Activated T-helper 1 cell treated with anti-CD3 and anti-CD28 coated beads, Interleukin-12 subunit alpha, Interleukin-12 subunit beta, Interleukin-2, Interleukin-4 antibody, amounts not matched to agents 30 ng/mL and 10 ng/mL and 1 ng/mL, durations not matched to agents 14 hours and 24 hours and 36 hours (primary cell): ENCODE measurements at regions of chr5 and their contacts with region 1.

Region 1: DNA sequence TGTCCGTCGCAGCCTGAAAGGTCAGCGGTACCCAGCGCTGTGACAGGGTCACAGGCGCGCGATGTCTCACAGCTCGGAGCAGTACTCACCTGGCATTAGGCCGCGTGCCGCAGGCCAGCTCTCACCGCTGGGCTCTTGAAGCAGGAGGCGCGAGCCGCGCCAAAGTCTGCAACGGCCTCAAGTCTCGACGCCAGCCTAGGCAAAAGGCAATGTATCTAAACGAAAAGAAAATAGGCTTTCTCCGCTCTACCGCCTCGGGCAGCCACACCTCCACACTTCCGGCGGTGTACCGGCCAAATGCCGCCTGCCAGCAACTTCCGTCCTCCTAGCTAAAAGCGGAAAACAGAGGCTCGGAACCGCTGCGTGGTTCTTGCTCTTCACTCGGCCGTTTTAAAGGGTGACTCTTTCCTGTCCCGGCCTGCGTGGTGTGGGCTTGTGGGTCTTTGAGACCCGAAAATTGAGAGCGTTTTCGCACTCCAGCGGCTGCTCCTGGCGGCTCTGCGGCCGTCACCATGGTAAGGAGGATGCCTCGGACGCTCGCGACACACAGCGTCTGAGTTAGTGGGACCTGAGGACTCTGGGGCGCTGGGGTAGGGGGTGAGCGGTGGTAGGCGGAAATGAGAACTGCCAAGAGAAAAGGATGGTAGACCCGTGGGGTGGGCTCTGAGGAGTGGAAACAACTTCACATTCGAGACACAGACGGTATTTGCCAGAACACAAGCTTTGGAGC is at the starts of genes GFM2 and NSA2:
- DNase-seq: peak; percentile 91
- H3K4me3 Mint-ChIP-seq: peak within 1 kb of the TSS; percentile 98
- H3K27ac Mint-ChIP-seq: peak within 1 kb of the TSS; percentile 98
- H3K4me1 Mint-ChIP-seq: peaks cover 17% of the 10 kb centered on the region
- H3K27me3 Mint-ChIP-seq: no peaks in the 10 kb centered on the region
- total RNA-seq, gene GFM2: 32.4 and 35.5 TPM in 2 replicates
- total RNA-seq, gene NSA2: 89.0 and 94.9 TPM in 2 replicates

Region 2: GRCh38 chr5:73902327-73903051 is 864.5 kb before region 1 on chr5:
- intact Hi-C with region 1: loop called (anchors 5 kb)
- DNase-seq: no peak
- H3K4me3 Mint-ChIP-seq: no peak overlapping the region
- H3K27ac Mint-ChIP-seq: no peak overlapping the region
- H3K4me1 Mint-ChIP-seq: peaks cover 14% of the 10 kb centered on the region
- H3K27me3 Mint-ChIP-seq: peaks cover 38% of the 10 kb centered on the region

Region 3: DNA sequence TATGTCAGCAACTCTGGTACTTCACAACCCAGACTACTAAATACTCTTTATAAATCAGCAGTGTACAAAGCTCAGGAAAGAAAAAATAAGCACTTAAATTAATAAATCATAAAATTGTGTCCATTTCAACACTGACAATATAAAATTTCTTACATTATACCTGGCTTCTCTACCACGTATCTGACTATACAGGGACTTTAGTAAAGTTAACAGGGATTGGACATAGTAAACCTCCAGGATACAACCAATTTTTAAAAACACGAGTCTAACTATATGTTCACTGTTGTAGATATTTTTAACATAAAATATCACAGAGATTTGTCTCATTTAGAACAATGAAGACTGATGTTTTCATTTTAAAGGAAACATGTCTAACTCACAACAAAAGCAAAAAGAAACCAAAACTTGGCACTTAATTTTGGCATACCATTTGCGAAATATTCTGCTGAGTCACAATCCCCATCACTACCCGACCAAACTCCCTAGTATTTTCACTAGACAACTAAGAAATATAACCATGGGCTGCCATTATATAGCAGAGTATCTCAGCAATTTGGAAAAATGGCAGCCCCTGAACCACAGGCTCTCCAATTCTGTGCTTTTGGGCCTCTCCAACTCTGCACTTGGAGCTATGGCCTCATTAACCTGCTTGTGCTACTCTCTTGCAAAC is 84.8 kb after region 1 on chr5:
- intact Hi-C with region 1: loop called (anchors 5 kb)
- DNase-seq: no peak
- H3K4me3 Mint-ChIP-seq: peak overlapping the region; percentile 73
- H3K27ac Mint-ChIP-seq: peak overlapping the region; percentile 75
- H3K4me1 Mint-ChIP-seq: peaks cover 20% of the 10 kb centered on the region
- H3K27me3 Mint-ChIP-seq: no peaks in the 10 kb centered on the region

Region 4: GRCh38 chr5:75236322-75237316 is 469.6 kb after region 1 on chr5 and contains the start of gene ANKRD31:
- intact Hi-C with region 1: loop called (anchors 1 kb)
- DNase-seq: peak; percentile 86
- H3K4me3 Mint-ChIP-seq: peak within 1 kb of the TSS; percentile 90
- H3K27ac Mint-ChIP-seq: peak within 1 kb of the TSS; percentile 97
- H3K4me1 Mint-ChIP-seq: peaks cover 15% of the 10 kb centered on the region
- H3K27me3 Mint-ChIP-seq: peaks cover 6% of the 10 kb centered on the region
- total RNA-seq, gene ANKRD31: 0.36 and 0.37 TPM in 2 replicates

Region 5: DNA sequence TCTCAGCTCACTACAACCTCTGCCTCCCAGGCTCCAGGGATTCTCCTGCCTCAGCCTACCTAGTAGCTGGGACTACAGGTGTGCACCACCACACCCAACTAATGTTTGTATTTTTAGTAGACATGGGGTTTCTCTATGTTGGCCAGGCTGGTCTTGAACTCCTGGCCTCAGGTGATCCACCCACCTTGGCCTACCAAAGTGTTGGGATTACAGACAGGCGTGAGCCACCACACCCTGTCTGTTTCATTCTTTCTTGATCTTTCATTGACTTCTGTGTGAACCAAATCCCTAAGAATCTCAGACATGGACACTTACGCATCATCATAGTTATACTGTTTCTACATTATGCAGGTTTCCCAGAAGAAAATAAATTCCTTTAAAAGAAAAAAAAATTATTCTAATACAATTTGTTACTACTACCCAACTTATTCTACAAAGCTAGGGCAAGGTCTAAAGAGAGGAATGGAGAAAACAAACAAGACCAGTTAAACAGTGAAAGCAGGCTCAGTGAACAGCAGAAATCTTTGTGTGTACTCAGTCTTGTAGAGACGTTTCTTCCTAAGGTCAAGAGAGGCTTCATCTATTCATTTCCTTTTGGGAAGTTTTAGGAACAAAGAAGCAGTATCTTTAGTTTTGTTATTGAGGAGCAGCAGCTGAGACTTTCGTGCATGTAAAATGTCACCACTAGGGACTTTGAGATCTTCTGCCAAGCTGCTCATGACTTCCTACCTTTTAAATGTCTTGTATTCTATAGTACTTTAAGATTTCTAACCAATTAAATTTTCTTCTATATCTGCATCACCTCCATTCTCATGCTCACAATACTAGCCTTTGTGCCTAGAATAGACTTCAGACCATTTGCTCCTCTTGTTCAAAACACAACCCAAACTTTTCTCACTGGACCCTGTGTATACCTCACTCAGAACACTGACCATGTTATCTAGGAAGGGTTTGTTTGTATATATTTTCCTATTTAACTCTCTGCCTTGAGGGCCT is 564.4 kb after region 1 on chr5:
- intact Hi-C with region 1: no loop called
- DNase-seq: no peak
- H3K4me3 Mint-ChIP-seq: no peak overlapping the region
- H3K27ac Mint-ChIP-seq: no peak overlapping the region
- H3K4me1 Mint-ChIP-seq: no peaks in the 10 kb centered on the region
- H3K27me3 Mint-ChIP-seq: no peaks in the 10 kb centered on the region

Region 6: GRCh38 chr5:75511435-75512384 is 744.7 kb after region 1 on chr5 and contains the starts of genes CERT1 and POLK:
- intact Hi-C with region 1: loop called (anchors 1 kb)
- DNase-seq: peak; percentile 96
- H3K4me3 Mint-ChIP-seq: peak within 1 kb of the TSS; percentile 99
- H3K27ac Mint-ChIP-seq: peak within 1 kb of the TSS; percentile 93
- H3K4me1 Mint-ChIP-seq: peaks cover 62% of the 10 kb centered on the region
- H3K27me3 Mint-ChIP-seq: no peaks in the 10 kb centered on the region
- total RNA-seq, gene CERT1: 41.0 and 43.4 TPM in 2 replicates
- total RNA-seq, gene POLK: 38.0 and 40.4 TPM in 2 replicates

Region 7: GRCh38 chr5:76256116-76256889 is 1489.3 kb after region 1 on chr5:
- intact Hi-C with region 1: loop called (anchors 5 kb)
- DNase-seq: peak; percentile 55
- H3K4me3 Mint-ChIP-seq: no peak overlapping the region
- H3K27ac Mint-ChIP-seq: no peak overlapping the region
- H3K4me1 Mint-ChIP-seq: no peaks in the 10 kb centered on the region
- H3K27me3 Mint-ChIP-seq: peaks cover 22% of the 10 kb centered on the region